Activated T-helper 1 cell treated with anti-CD3 and anti-CD28 coated beads, Interleukin-12 subunit alpha, Interleukin-12 subunit beta, Interleukin-2, Interleukin-4 antibody, amounts not matched to agents 30 ng/mL and 10 ng/mL and 1 ng/mL, durations not matched to agents 14 hours and 24 hours and 36 hours (primary cell): ENCODE measurements at regions of chr2 and their contacts with region 1.

Region 1: GRCh38 chr2:105576440-105577252 is 168.1 kb upstream of the NCK2 start:
- DNase-seq: no peak
- H3K4me3 Mint-ChIP-seq: no peak overlapping the region
- H3K27ac Mint-ChIP-seq: no peak overlapping the region
- H3K4me1 Mint-ChIP-seq: peaks cover 15% of the 10 kb centered on the region
- H3K27me3 Mint-ChIP-seq: no peaks in the 10 kb centered on the region

Region 2: DNA sequence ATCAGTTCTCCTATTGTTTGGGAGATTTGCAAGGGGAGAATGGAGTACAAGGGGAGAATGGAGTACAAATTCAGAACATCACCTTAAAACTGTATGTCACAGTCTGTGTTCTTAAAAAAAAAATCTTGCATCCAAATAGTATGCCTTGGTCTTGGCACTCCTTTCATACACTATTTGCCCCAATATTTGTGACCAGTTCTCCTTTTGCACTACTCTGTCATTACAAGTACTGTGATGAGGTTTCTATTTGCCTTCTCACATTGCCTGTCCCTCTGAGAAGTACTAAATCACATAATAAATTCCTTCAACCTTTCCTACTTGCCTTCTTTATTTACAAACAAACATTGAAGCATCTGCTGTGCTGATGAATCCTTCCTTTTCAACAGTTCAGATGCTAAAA is 132.1 kb after region 1 on chr2:
- intact Hi-C with region 1: no loop called
- DNase-seq: no peak
- H3K4me3 Mint-ChIP-seq: no peak overlapping the region
- H3K27ac Mint-ChIP-seq: no peak overlapping the region
- H3K4me1 Mint-ChIP-seq: peaks cover 5% of the 10 kb centered on the region
- H3K27me3 Mint-ChIP-seq: peaks cover 18% of the 10 kb centered on the region

Region 3: DNA sequence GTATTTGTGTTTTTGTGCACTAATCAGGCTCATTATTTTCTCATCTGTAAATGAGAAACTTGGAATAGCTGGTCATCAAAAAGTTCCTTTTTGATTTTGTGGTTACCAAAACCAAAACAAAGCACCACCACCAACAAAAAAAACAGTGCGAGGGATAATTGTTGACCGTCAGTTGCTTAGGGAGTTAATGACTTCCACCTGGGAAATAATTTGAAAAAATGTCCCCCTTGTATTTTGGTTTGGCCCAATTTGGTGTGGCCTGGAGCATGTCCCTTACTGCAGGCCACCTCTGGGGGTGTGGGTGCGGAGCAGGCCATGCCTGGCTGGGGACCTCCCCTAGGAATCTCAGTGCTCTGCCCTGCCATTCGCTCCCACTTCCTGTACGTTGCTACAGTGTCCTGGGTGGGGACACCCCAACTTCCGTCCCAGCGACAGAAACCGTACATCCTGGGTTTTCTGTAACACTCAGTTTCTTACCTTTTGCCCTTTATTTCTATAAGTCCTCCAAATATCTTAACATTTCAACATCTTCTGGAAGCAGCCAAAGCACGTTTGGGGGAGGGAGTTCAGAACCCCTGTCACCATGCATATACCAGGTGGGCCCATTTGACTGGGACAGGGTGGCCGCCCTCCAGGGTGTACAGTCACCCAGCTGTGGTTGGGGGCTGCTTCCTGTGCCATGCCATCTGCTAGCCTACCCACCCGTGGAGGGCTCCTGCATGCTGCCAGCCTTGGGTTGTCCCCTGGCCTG is 199.3 kb after region 1 on chr2:
- intact Hi-C with region 1: loop called (anchors 2 kb)
- DNase-seq: no peak
- H3K4me3 Mint-ChIP-seq: peak overlapping the region; percentile 55
- H3K27ac Mint-ChIP-seq: peak overlapping the region; percentile 81
- H3K4me1 Mint-ChIP-seq: peaks cover 90% of the 10 kb centered on the region
- H3K27me3 Mint-ChIP-seq: no peaks in the 10 kb centered on the region

Region 4: DNA sequence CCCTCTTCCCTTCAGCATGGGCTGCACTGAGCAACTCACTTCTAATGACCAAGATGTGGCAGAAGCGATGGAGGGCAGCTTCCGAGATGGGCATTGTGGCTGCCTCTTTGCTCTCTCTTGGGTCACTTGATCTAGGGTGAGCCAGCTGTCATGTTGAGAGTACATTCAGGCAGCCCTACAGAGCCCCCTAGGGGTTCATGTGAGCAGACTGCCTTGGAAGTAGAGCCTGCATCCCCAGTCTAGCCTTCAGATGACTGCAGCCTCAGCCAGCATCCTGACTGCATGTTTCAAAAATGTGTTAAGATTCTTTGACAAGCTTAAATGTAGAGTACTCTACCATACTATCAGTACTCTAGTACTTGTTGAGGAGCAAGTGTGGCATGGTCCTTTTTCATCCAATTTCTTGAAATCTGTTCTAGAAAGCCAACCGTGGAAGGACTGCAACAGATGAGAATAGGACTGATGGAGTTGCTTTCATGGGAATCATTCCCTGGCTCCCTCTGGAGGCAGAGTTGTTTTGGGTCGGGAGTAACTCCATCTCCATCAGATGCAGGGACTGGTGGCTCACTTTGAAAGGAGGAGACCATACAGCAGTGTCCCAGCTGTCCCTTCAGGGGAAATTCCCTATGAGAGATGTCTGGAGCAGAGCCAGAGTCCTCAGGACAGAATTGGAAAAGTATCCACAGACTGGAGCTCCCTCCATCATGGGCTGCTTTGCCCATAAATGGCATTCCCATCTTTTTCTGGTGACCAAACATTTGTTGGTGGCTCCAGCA is 312.2 kb after region 1 on chr2:
- intact Hi-C with region 1: loop called (anchors 1 kb)
- DNase-seq: no peak
- H3K4me3 Mint-ChIP-seq: no peak overlapping the region
- H3K27ac Mint-ChIP-seq: peak overlapping the region; percentile 22
- H3K4me1 Mint-ChIP-seq: peaks cover 55% of the 10 kb centered on the region
- H3K27me3 Mint-ChIP-seq: no peaks in the 10 kb centered on the region

Region 5: DNA sequence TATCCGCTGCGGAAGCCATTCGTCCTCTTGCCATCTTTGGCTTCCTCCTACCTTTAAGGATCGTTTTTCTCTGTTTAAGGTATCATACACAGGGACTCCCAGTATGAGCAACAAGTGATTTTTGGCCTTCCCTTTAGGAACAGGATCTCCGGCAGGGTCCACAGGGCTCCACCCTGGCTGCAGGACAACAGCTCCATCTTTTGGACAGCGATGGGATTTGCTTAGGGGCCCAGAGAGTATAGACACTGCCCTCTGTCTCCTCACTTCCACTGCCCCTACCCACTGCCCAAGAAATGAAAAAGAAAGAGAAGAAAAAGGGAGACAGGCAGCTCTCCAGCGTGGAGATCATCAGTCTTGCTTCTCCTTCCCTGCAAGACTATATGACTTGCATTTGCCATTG is 392.9 kb after region 1 on chr2:
- intact Hi-C with region 1: loop called (anchors 1 kb)
- DNase-seq: no peak
- H3K4me3 Mint-ChIP-seq: no peak overlapping the region
- H3K27ac Mint-ChIP-seq: no peak overlapping the region
- H3K4me1 Mint-ChIP-seq: no peaks in the 10 kb centered on the region
- H3K27me3 Mint-ChIP-seq: no peaks in the 10 kb centered on the region

Region 6: DNA sequence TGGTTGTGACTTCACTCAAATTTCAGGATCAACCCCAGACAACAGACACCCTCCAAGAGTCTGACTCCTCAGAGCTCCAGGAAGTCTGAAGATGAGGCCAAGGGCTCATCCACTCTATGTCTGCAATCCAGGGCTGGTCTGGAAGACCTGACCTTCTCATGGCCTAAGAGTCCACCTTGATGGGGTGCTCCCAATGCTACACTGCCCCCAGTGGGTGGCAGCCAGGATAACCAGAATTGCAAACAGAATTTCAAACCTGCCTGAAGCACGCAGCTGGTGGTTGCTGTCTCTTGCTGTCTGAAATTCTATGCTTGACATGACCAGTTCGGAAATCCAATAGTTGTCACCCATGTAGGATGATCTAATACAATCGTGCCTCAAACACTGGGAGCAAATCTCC is 521.4 kb after region 1 on chr2:
- intact Hi-C with region 1: loop called (anchors 1 kb)
- DNase-seq: no peak
- H3K4me3 Mint-ChIP-seq: no peak overlapping the region
- H3K27ac Mint-ChIP-seq: no peak overlapping the region
- H3K4me1 Mint-ChIP-seq: peaks cover 31% of the 10 kb centered on the region
- H3K27me3 Mint-ChIP-seq: no peaks in the 10 kb centered on the region